ENCODE measurements at regions of chr12 and their contacts with region 1.

Region 1: DNA sequence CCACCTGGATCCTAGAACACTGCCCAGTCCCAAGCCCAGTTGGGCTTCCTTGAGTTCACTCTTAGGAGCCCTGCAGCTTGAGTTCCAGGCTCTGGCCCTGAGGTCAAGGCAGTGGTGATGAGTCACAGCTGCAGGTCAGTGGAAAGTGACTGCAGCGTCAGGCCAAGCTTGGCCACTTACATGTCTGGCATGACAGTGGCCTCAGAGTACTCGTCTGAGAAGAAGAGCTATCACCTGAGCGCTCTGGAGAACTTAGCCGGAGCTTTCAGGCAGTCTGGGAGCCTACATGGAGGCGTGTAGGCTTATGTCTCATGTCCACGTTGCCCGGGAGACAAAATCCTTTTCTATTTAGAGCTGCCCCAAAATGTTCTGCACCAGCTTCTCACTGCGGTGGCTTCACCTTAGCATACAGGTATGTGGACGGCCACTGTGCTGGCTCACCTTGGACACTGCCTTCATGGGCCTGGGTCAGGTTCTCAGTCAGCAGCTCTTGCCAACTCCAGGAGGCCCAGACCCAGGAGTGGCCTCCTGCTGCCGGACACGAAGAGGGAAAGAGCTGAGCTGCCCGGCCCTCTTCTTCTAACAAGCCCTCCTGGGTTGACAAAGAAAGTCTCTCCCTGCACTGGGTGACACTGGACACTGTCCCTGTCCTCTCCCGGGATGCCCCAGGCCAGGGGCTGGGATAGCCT is 75.7 kb downstream of the ARL6IP4 start:
- DNase-seq: no peak
- H3K4me3 ChIP-seq: no peak overlapping the region
- CTCF ChIP-seq: no peak

Region 2: DNA sequence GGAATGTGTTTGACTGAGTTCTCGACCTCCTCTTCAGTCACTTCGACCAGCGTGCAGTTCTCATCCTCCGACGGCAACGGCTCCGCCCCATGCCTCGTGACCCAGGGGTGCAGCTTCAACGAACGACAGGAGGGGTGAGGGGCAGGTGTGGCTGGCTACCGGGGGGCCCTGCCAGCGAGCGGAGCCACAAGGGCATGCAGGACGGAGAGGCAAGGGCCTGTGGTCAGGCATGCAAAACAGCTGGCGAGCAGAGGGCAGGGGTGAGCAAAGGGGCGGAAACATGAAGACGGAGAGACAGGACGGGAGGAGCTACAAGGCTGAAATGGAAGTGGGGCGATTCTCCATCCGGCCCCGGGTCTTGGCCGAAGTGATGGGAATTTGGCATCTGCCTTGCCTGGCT is 1807.6 kb before region 1 on chr12:
- in situ Hi-C with region 1: no loop called
- DNase-seq: no peak
- H3K4me3 ChIP-seq: no peak overlapping the region
- CTCF ChIP-seq: no peak

Region 3: GRCh38 chr12:122895705-122896636 is 160.2 kb before region 1 on chr12 and contains the start of gene VPS37B:
- in situ Hi-C with region 1: no loop called
- DNase-seq: no peak
- H3K4me3 ChIP-seq: peak within 1 kb of the TSS; percentile 84
- CTCF ChIP-seq: no peak

Region 4: DNA sequence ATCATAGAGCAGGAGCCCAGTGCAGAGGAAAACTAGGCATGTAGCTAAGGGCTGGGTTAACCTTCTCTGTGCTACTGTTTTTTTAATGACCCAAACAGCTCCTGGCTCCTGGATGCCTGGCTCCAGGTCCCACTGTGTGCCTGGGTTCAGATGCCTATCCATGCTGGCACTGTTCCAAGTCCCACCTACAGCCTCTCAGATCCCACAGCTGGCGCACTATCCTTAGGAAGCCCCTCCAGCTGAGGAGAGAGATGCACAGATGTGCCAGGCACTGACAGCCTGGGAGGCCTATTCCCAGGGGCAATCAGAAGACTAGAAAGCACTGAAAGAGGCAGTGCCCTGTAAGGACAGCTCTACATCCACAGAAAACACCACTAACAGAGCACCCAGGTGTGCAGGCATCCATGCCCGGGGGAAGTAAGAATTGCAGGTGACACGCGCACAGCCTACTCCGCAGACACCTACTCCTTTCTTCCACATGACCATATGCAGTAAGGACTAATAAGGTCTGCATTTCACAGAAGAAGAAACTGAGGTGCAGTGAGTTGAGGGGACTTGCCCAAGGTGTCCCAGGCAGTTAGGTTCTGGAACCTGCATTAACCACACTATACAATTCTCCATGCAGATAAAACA is 43.5 kb after region 1 on chr12:
- in situ Hi-C with region 1: loop called (anchors 5 kb)
- DNase-seq: no peak
- H3K4me3 ChIP-seq: no peak overlapping the region
- CTCF ChIP-seq: no peak

Region 5: DNA sequence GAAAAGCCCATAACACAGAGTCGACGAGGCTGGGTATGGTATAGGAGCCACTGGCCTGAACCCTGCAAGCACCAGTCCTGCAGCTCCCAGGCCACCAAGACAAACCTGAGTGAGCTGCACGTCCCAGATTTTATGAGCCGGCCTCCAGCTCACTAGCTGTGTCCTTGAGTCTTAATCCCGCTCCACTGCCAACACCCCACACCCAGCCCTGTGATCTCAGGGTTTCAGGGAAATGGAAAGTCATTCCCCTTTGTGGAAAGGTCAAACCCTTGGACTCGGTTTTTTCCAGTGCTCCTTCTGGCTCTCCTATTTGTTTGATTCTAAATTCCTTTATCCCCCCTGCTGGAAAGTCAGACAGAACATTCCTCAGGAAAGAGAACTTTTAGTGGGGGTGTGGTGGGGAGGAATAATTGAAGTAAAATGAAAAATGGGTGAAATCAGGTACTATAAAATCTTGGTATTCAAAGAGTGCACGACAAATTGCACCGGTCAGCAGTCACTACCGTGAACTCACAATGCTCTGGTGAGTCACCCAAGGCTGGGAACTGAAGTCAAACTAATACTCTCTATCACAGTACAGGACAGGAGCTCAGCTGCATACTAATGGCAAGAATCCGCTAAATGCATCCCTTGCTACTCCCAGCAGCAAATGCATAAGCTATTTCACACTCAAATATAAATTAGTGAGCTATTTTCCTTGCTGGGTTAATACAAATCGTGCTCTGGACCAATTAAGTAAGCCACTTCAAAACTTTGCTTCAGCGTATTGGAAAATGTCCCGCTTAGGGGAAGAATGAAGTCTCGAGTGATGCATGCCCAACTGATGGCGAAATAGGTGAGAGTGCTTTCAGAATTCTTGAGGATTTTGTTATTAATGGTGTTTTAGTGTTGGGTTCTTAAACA is 85.7 kb after region 1 on chr12:
- in situ Hi-C with region 1: loop called (anchors 5 kb)
- DNase-seq: peak; percentile 72
- H3K4me3 ChIP-seq: no peak overlapping the region
- CTCF ChIP-seq: no peak

Region 6: DNA sequence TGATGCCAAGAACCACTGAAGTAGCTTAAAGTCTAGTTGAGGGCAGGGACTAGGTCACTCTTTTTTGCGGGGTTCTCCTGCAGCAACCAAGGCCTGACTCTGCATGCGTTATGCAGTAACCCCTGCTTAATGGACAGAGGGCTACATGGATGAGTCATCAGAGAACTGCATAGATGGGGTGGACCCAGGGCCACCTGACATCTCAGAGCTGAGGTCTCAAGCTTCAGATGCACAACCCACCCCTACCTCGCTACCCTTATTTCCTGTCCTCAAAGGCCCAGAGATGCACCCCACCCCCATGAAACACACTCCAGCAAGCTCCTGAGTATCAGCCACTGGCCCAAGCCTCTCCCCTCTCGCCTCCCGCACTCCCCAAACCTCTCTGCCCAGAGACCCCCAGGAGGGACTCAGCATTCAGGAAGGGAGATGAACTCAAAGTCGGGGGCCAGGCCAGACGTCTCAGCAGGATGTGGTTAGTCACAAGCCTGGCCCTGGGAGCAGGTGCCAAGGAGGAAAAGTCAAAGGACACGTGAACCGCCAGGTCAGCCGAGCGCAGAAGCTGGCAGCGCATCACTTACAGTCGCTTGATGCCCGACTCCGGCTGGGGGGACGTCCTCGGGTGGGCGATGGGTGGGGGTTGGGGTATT is 427.5 kb after region 1 on chr12:
- in situ Hi-C with region 1: no loop called
- DNase-seq: no peak
- H3K4me3 ChIP-seq: no peak overlapping the region
- CTCF ChIP-seq: no peak